ENCODE measurements at regions of chr22 and their contacts with region 1.

Region 1: GRCh38 chr22:37817705-37818408 is 5.3 kb upstream of the GALR3 start:
- DNase-seq: peak; percentile 94
- ATAC-seq: peak; percentile 78
- H3K4me3 Mint-ChIP-seq: peak overlapping the region; percentile 71
- H3K27ac Mint-ChIP-seq: peak overlapping the region; percentile 98
- H3K4me1 Mint-ChIP-seq: peaks cover 22% of the 10 kb centered on the region
- H3K27me3 Mint-ChIP-seq: peaks cover 39% of the 10 kb centered on the region
- CTCF ChIP-seq: peak; percentile 91

Region 2: DNA sequence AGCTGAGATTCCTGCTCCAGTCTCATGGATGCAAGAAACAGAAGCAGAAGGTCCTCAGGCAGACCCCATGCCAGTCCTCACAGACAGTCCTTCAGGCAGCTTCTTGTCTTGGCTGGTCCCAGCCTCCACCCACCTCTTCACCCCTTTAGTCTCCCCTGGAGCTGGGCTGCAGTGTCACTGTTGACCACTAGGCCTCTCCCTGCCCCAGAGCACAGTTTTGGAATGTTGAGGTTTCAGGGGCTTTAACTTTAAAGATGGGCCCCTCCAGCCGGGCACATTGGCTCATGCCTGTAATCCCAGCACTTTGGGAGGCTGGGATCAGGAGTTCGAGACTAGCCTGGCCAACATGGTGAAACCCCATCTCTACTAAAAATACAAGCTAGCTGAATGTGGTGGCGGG is 49.6 kb before region 1 on chr22:
- CTCF ChIA-PET with region 1: interaction called, 12 read pairs
- POLR2A ChIA-PET with region 1: no interaction called
- DNase-seq: peak; percentile 54
- ATAC-seq: peak; percentile 82
- H3K4me3 Mint-ChIP-seq: no peak overlapping the region
- H3K27ac Mint-ChIP-seq: no peak overlapping the region
- H3K4me1 Mint-ChIP-seq: no peaks in the 10 kb centered on the region
- H3K27me3 Mint-ChIP-seq: peaks cover 4% of the 10 kb centered on the region; the same call in 1 of the 2 replicates
- CTCF ChIP-seq: peak; percentile 47

Region 3: DNA sequence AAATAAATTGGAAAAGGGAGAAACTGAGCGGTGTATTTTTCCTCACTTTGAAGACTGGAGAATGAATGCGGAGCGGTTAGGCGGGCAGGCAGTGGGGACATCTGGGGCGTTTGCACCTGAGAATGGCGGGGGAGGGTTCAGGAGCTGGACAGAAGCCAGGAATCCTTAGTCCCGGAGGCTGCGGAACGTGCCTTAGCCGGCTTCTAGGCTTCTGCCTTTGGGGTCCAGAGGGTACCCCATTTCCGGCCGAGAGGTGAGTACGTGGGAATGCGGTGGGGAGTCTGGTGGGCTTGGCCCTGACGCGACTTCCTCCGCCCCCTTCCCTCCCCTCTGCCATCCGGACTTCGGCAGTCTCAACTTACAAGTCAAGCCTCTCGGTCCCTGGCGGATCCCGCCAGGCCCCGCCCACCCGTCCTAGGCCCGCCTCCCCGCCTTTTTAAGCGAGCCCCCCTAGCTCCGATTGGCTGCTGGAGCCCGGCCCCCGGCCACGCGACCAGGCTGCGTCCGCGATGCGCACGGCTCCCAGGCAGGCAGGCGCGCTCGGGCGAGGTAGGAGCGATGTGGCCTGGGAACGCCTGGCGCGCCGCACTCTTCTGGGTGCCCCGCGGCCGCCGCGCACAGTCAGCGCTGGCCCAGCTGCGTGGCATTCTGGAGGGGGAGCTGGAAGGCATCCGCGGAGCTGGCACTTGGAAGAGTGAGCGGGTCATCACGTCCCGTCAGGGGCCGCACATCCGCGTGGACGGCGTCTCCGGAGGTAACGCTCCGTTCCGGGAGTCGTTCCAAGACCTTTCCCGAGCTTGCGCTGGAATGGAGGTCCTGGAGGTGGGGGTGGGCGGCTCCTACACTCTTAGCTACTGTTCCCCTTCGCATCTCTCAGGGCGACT is 10.2 kb before region 1 on chr22 and contains the start of gene GCAT:
- CTCF ChIA-PET with region 1: interaction called, 79 read pairs
- POLR2A ChIA-PET with region 1: interaction called, 42 read pairs
- DNase-seq: peak; percentile 98
- ATAC-seq: peak; percentile 87
- H3K4me3 Mint-ChIP-seq: peak within 1 kb of the TSS; percentile 84
- H3K27ac Mint-ChIP-seq: no peak within 1 kb of the TSS
- H3K4me1 Mint-ChIP-seq: peaks cover 41% of the 10 kb centered on the region
- H3K27me3 Mint-ChIP-seq: peaks cover 59% of the 10 kb centered on the region
- CTCF ChIP-seq: no peak
- total RNA-seq, gene GCAT: 33.0 to 36.4 TPM (median 36.3 TPM) in 3 replicates

Region 4: GRCh38 chr22:37843741-37843990 is 25.8 kb after region 1 on chr22:
- CTCF ChIA-PET with region 1: interaction called, 42 read pairs
- POLR2A ChIA-PET with region 1: no interaction called
- DNase-seq: peak; percentile 59
- ATAC-seq: peak; percentile 19
- H3K4me3 Mint-ChIP-seq: peak overlapping the region; percentile 92
- H3K27ac Mint-ChIP-seq: peak overlapping the region; percentile 97
- H3K4me1 Mint-ChIP-seq: peaks cover 19% of the 10 kb centered on the region
- H3K27me3 Mint-ChIP-seq: no peaks in the 10 kb centered on the region
- CTCF ChIP-seq: no peak

Region 5: GRCh38 chr22:37896181-37896592 is 78.3 kb after region 1 on chr22:
- CTCF ChIA-PET with region 1: interaction called, 16 read pairs
- POLR2A ChIA-PET with region 1: no interaction called
- DNase-seq: no peak
- ATAC-seq: no peak
- H3K4me3 Mint-ChIP-seq: no peak overlapping the region
- H3K27ac Mint-ChIP-seq: peak overlapping the region; percentile 94
- H3K4me1 Mint-ChIP-seq: peaks cover 51% of the 10 kb centered on the region
- H3K27me3 Mint-ChIP-seq: no peaks in the 10 kb centered on the region
- CTCF ChIP-seq: no peak

Region 6: GRCh38 chr22:37933711-37934376 is 116.0 kb after region 1 on chr22:
- CTCF ChIA-PET with region 1: interaction called, 15 read pairs
- POLR2A ChIA-PET with region 1: no interaction called
- DNase-seq: peak; percentile 97
- ATAC-seq: peak; percentile 97
- H3K4me3 Mint-ChIP-seq: no peak overlapping the region
- H3K27ac Mint-ChIP-seq: peak overlapping the region; percentile 72
- H3K4me1 Mint-ChIP-seq: peaks cover 3% of the 10 kb centered on the region
- H3K27me3 Mint-ChIP-seq: no peaks in the 10 kb centered on the region; the same call in 1 of the 2 replicates
- CTCF ChIP-seq: peak; percentile 77